Motor neuron (in vitro differentiated cells): ENCODE measurements at regions of chr3 and their contacts with region 1.

Region 1: GRCh38 chr3:148379763-148380382 is 317.8 kb upstream of the AGTR1 start:
- ATAC-seq: peak; percentile 46 to 98 (median 76)
- H3K4me3 ChIP-seq: no peak overlapping the region
- H3K27ac ChIP-seq: no peak overlapping the region
- H3K4me1 ChIP-seq: no peaks in the 10 kb centered on the region

Region 2: DNA sequence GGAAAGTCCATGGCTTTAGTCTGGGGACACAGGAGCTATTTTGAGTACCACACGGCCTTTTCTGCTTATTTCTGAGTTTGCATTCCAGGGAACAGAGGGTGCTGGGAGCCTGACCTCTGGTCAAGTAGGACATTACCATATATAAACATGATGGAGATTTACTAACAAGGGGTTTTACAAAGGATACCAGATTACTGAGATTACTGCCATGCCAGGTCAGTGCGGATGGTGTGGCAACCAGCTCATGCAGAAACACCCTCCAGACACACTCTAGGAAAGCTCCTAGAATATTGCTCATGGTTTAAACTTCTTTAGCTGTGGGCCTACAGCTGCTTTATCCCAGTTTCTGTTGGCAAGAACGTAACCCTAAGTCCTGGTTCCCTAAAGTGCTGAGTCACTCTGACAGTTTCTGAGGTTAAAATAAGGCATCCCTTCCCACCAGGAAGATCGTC is 263.5 kb after region 1 on chr3:
- in situ Hi-C with region 1: loop called in 1 of 9 experiments (anchors 25 kb)
- ATAC-seq: peak in 2 of 8 experiments; percentile 25 to 27
- H3K4me3 ChIP-seq: no peak overlapping the region
- H3K27ac ChIP-seq: no peak overlapping the region
- H3K4me1 ChIP-seq: no peaks in the 10 kb centered on the region

Region 3: DNA sequence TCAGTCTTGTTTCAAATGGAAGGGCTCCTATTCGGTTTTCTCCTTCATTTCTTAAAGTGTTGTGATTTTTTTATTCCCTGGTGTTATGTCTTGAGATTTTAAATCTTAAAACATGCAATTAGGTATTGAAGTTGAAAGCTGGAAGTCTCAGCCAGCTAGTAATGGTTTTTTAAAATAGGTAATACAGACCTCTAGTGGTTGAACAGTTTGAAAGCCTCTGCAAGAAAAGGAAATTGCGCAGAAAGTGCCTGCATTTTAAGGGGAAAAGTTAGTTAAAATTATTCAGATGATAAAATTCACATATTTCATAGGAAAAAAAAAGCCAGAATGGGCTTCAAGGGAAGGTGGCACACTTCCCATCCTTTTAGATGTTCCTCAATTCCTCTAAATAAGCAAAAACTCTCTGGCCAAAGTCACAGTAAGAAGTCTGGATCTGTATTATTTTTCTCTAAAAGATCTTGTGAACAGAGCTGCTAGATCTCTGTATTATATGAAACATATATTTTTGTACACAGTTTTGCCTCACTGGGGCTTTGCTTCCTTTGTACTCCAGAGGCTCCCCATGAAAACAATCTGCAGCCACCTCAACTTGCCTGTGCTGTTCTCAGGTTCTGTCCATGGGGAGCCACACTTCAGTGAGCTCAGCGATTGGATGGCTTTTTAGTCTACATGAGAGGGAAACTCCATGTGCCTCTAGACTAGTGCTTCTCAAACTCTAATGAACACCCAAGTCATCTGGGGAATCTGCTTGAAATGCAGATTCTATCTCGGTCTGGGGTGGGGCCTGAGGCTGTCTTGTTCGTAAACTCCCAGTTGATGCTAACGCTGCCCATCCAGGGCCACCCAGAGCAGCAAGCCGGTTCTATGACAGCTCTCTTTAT is 339.3 kb after region 1 on chr3:
- in situ Hi-C with region 1: loop called in 4 of 9 experiments (anchors 25 kb)
- ATAC-seq: no peak
- H3K4me3 ChIP-seq: no peak overlapping the region
- H3K27ac ChIP-seq: no peak overlapping the region
- H3K4me1 ChIP-seq: no peaks in the 10 kb centered on the region